ENCODE measurements at regions of chr1 and their contacts with region 1.

Region 1: DNA sequence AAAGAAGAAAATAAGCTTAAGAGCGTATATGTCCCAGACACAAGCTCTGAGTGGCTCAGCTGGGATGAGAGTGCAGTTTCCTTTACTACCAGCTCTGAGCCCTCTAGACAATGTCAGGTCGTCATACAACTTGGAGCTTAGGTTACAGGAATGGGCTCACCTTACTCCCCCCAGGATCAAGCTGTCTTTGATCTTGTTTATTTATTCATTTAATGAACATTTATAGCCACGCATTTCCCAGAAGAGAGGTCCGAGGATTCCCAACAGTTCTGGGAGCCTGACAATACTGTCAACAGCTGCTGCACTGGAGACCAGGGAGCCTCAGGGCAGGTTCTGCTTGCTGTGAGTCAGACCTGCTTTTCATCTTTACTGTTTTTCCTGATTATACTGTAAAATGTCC is 378.9 kb downstream of the PLPP3 start:
- DNase-seq: no peak
- H3K4me3 ChIP-seq: no peak overlapping the region
- H3K27ac ChIP-seq: no peak overlapping the region
- H3K4me1 ChIP-seq: no peaks in the 10 kb centered on the region
- H3K27me3 ChIP-seq: no peaks in the 10 kb centered on the region
- CTCF ChIP-seq: no peak

Region 2: DNA sequence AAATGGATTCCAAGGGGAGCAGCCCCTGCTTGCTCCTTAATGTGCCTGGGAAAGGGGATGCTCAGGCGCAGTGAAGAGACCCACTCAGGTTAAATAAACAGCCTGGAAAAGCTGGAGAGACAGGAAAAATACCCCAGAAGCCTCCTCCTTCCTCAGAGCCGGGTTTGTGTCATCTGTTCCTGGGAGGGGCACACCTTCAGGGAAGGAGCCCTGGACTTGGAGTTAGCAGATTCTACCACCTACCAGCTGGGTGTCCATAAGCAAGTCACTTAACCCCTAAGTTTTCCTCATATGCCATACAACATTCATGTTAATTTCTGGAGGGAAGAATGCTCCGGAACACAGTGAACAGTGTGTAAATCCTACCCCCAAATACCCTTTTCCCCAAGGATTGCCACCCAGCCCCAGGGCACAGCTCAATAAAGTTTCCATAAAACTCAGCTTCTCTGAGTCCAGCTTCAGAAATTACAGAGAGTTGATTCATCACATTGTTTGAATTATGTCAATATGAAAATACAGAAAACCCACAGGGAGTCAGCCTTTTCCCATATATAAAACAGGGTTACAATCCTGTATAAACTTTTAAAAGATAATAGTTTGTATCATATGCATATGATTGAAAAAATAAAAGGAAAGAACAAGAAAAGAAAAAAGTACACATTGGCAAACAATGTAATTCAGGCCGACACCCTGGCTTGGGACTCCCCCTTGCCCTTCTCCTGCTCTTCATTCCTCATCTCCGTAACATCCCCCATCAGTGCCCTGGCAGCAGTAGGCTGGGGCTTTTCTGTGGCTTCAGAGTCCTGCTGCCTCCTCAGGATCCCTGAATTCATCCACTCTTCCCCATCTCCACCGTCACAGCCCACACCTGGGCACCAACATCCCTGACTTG is 693.5 kb before region 1 on chr1:
- dilution Hi-C with region 1: loop called (anchors 25 kb)
- DNase-seq: no peak
- H3K4me3 ChIP-seq: no peak overlapping the region
- H3K27ac ChIP-seq: no peak overlapping the region
- H3K4me1 ChIP-seq: no peaks in the 10 kb centered on the region
- H3K27me3 ChIP-seq: no peaks in the 10 kb centered on the region
- CTCF ChIP-seq: no peak

Measured in keratinocyte (primary cell).